ENCODE measurements at regions of chr2 and their contacts with region 1.

Region 1: GRCh38 chr2:194545978-194546377 is 1111.0 kb upstream of the SLC39A10 start:
- DNase-seq: no peak
- H3K4me3 ChIP-seq: no peak overlapping the region
- H3K27ac ChIP-seq: no peak overlapping the region
- H3K4me1 ChIP-seq: no peaks in the 10 kb centered on the region
- H3K27me3 ChIP-seq: no peaks in the 10 kb centered on the region
- CTCF ChIP-seq: peak; percentile 38; the same call in 1 of the 2 replicates

Region 2: DNA sequence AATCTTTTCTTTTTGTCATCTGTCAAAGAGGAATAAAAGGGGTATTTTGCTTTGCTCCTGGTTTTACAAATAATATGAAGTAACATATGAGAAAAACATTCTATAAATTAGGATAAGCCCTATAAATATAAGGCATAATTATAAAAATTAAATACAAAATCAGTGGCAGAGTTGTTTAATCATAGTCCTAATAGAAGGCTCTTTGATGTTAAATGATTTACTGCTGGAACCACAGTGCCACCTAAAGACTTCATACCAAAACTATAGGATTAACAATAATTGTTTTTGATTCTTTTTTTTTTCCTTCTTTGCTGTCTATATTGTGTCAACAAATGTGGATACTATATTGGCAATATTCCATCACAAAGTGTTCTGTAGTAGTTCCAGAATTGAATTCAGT is 273.4 kb after region 1 on chr2:
- CTCF ChIA-PET with region 1: no interaction called
- POLR2A ChIA-PET with region 1: no interaction called
- intact Hi-C with region 1: loop called (anchors 2 kb)
- DNase-seq: no peak
- H3K4me3 ChIP-seq: no peak overlapping the region
- H3K27ac ChIP-seq: no peak overlapping the region
- H3K4me1 ChIP-seq: no peaks in the 10 kb centered on the region
- H3K27me3 ChIP-seq: no peaks in the 10 kb centered on the region
- CTCF ChIP-seq: peak; percentile 23; the same call in 1 of the 2 replicates

Region 3: DNA sequence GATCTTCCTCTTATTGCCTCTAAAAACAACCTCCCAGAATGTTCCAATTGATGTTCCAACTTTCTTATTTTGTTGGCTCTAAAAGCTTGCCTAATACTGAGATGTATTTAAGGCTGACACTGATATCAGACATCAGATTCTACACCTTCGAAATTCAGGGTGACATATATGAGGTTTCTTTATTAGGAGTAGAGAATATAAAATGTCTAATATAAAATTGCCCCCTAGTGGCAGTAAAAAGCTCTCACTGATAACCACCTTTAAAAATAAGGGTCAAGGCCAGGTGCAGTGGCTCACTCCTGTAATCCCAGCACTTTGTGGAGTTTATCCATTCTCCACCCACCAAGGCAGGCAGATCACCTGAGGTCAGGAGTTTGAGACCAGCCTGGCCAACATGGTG is 321.4 kb after region 1 on chr2:
- CTCF ChIA-PET with region 1: no interaction called
- POLR2A ChIA-PET with region 1: no interaction called
- intact Hi-C with region 1: loop called (anchors 5 kb)
- DNase-seq: no peak
- H3K4me3 ChIP-seq: no peak overlapping the region
- H3K27ac ChIP-seq: no peak overlapping the region
- H3K4me1 ChIP-seq: no peaks in the 10 kb centered on the region
- H3K27me3 ChIP-seq: no peaks in the 10 kb centered on the region
- CTCF ChIP-seq: peak; percentile 67

Region 4: DNA sequence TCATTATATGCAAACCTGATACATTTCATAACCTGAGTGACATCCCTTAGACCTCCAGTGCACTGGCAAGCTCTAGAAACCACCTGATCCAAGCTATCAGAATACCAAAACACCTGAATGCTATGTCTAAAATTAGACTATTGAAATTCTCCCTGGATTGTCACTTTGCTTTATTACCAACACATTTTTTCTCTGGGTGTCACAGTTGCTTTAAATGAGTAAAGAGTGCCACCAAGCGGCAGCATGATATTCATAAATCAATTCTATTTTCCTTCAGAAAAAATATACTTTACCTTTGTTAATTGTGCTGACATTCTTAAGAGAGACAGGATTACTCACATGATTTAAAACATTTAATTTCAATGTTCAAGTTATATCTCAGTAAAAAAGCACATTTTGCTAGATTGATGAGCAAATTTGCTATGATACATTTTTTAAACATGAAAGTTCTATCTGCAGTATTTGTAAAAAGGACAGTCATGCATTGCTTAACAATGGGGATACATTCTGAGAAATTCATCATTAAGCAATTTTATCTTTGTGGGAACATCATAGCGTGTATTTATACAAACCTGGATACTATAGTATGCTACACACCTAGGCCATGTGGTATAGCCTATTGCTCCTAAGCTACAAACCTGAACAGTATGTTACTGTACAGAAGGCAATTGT is 772.6 kb after region 1 on chr2:
- CTCF ChIA-PET with region 1: no interaction called
- POLR2A ChIA-PET with region 1: no interaction called
- intact Hi-C with region 1: loop called (anchors 1 kb)
- DNase-seq: peak; percentile 19 to 37
- H3K4me3 ChIP-seq: no peak overlapping the region
- H3K27ac ChIP-seq: no peak overlapping the region
- H3K4me1 ChIP-seq: no peaks in the 10 kb centered on the region
- H3K27me3 ChIP-seq: no peaks in the 10 kb centered on the region
- CTCF ChIP-seq: peak; percentile 75